ENCODE measurements at regions of chr13 and their contacts with region 1.

Region 1: DNA sequence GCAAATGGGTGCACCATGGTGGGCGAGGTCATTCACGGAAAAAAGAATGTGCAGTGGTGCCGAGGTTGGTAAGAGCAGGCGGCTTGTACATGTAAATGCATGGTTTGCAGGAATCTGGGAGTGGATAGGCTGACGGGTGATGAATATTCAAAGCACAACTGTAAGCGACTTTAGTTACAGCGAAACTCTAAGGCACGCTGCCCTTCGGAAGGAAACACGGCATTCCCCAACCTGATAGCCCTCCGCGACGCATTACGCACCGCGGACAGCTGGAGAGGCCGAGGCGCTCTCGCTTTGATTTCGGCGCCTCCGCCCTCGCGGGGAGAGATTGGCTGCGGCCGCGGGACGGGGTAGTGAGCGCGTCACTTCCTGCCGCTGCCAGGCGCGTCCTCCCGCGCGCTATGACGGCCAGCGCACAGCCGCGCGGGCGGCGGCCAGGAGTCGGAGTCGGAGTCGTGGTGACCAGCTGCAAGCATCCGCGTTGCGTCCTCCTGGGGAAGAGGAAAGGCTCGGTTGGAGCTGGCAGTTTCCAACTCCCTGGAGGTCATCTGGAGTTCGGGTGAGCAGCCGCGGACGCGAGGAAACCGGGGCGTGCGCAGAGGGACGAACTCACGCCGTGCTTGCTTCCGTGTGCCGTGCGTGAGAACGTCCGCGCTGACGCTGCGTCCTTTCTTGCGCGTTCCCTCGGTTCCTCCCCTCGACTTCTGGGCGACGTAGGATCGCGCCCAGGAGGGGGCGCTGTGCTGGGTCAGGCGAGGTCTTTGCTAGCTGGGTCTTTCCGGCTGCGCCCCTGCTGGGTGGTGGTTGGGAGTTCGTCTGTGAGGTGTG is at the start of gene NUDT15:
- DNase-seq: peak; percentile 94
- H3K4me3 Mint-ChIP-seq: peak within 1 kb of the TSS; percentile 98
- H3K27ac Mint-ChIP-seq: peak within 1 kb of the TSS; percentile 99
- H3K4me1 Mint-ChIP-seq: peaks cover 46% of the 10 kb centered on the region
- H3K27me3 Mint-ChIP-seq: no peaks in the 10 kb centered on the region
- total RNA-seq, gene NUDT15: 15.3 and 16.8 TPM in 2 replicates

Region 2: GRCh38 chr13:46796515-46797474 is 1240.8 kb before region 1 on chr13 and contains the start of gene ESD:
- intact Hi-C with region 1: loop called (anchors 2 kb)
- DNase-seq: peak; percentile 83
- H3K4me3 Mint-ChIP-seq: peak within 1 kb of the TSS; percentile 93
- H3K27ac Mint-ChIP-seq: peak within 1 kb of the TSS; percentile 95
- H3K4me1 Mint-ChIP-seq: peaks cover 36% of the 10 kb centered on the region
- H3K27me3 Mint-ChIP-seq: peaks cover 7% of the 10 kb centered on the region
- total RNA-seq, gene ESD: 96.8 and 102 TPM in 2 replicates

Region 3: GRCh38 chr13:48094781-48095502 is 57.4 kb after region 1 on chr13 and contains the start of gene MED4:
- intact Hi-C with region 1: loop called (anchors 1 kb)
- DNase-seq: peak; percentile 98
- H3K4me3 Mint-ChIP-seq: peak within 1 kb of the TSS; percentile 98
- H3K27ac Mint-ChIP-seq: peak within 1 kb of the TSS; percentile 90
- H3K4me1 Mint-ChIP-seq: peaks cover 36% of the 10 kb centered on the region
- H3K27me3 Mint-ChIP-seq: peaks cover 5% of the 10 kb centered on the region
- total RNA-seq, gene MED4: 64.2 and 65.6 TPM in 2 replicates

Region 4: DNA sequence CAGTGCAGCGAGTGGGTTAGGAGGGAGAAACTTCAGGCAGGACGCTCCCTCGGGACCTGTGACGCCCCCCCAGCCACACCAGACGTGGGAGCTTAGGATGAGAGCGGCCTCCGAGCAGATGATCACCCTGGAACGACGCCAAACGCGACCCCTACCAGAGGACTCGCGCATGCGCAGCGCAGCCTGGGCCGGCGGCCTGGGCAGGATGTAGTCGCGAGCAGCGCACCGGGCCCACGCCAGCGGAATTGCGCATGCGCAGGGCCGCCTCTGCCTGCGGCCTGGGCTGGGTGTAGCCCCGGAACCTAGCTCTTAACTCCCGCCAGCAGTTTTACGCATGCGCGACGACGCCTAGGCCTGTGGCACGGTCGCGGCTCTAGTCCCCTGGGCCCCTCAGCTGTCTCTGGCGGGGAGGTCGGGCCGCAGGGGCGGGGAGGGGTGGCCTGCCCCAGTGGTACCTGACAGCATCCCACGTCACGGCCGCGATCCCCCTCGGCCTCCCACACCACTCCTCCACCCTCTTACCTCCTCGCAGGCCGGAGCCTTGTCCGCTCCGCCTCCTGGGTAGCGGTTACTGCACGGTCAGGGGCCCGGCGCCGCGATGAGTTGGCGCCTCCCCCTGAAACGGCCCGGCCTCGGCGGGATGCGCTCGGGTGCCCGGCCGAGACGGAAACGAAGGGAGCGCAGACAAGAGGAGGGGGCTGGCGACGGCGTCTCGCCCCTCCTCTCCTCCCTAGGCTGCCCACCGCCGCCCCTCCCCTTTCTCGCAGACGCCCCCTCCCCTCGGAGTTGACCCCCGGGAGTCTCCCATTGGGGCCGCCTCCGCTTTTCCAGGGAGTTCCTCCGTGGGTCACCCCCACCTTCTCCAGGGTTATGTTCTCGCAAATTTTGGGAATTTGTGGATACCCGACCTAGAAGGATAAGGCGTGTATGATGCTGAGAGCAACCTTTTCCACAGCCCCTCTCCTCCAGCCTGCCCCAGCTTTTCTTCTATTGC is 495.2 kb after region 1 on chr13 and contains the start of gene RCBTB2:
- intact Hi-C with region 1: loop called (anchors 1 kb)
- DNase-seq: peak; percentile 99
- H3K4me3 Mint-ChIP-seq: peak within 1 kb of the TSS; percentile 91
- H3K27ac Mint-ChIP-seq: peak within 1 kb of the TSS; percentile 98
- H3K4me1 Mint-ChIP-seq: peaks cover 32% of the 10 kb centered on the region
- H3K27me3 Mint-ChIP-seq: peaks cover 7% of the 10 kb centered on the region
- total RNA-seq, gene RCBTB2: 1.7 and 2.0 TPM in 2 replicates

Region 5: GRCh38 chr13:49110122-49110912 is 1072.8 kb after region 1 on chr13:
- intact Hi-C with region 1: loop called (anchors 5 kb)
- DNase-seq: peak; percentile 71
- H3K4me3 Mint-ChIP-seq: peak overlapping the region; percentile 87
- H3K27ac Mint-ChIP-seq: peak overlapping the region; percentile 70
- H3K4me1 Mint-ChIP-seq: peaks cover 31% of the 10 kb centered on the region
- H3K27me3 Mint-ChIP-seq: no peaks in the 10 kb centered on the region